PC-3 (cell line): ENCODE measurements at regions of chr1 and their contacts with region 1.

Region 1: GRCh38 chr1:39901698-39902459 is at the start of gene MYCL:
- DNase-seq: peak; percentile 94
- ATAC-seq: peak; percentile 87
- H3K4me3 ChIP-seq: peak within 1 kb of the TSS; percentile 86
- H3K27ac ChIP-seq: 0 out of 2 replicates have a peak within 1 kb of the TSS, but pooled peaks have one; percentile 10
- H3K4me1 ChIP-seq: peaks cover 7% of the 10 kb centered on the region; the same call in 1 of the 2 replicates
- H3K27me3 ChIP-seq: no peaks in the 10 kb centered on the region
- CTCF ChIP-seq: peak; percentile 87
- total RNA-seq, gene MYCL: 4.0 and 6.6 TPM in 2 replicates

Region 2: DNA sequence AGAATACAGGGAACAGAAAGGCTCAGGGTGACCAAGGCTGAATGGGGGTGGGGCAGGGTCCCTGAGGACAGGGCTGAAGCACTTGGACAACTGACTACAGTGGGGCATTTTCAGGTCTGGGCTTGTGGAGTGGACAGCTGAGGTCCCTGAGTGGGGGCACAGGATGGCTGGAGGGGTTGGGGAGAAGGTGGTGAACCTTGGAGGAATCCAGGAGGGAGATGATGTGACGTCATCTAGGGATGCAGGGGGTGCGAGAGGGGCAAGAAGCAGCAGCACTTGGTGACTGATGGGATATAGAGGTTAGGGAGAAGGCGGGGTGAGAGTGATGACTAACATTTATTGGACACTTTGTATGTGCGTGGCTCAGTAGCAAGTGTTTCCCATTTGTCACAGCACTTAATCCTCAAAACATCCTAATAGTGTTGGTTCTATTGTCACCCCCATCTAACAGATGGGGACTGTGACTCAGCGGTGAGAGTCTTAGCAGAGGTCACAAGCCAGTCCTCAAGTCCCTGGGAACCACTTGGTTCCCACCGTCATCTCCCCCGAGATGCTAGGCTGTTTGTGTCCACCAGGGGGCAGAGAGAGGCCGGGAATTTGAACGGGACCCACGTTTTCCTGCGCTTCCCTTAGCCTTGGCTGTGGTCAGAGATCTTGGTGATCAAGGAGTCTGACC is 85.3 kb before region 1 on chr1:
- CTCF ChIA-PET with region 1: interaction called, 11 read pairs
- POLR2A ChIA-PET with region 1: interaction called, 4 read pairs
- intact Hi-C with region 1: loop called (anchors 1 kb)
- DNase-seq: peak; percentile 89
- ATAC-seq: peak; percentile 76
- H3K4me3 ChIP-seq: no peak overlapping the region
- H3K27ac ChIP-seq: peak overlapping the region; percentile 70
- H3K4me1 ChIP-seq: peaks cover 44% of the 10 kb centered on the region
- H3K27me3 ChIP-seq: no peaks in the 10 kb centered on the region
- CTCF ChIP-seq: peak; percentile 75

Region 3: GRCh38 chr1:39845275-39846116 is 56.4 kb before region 1 on chr1:
- CTCF ChIA-PET with region 1: interaction called, 5 read pairs
- POLR2A ChIA-PET with region 1: interaction called, 8 read pairs
- intact Hi-C with region 1: loop called (anchors 1 kb)
- DNase-seq: peak; percentile 23
- ATAC-seq: peak; percentile 39; the same call in 1 of the 2 replicates
- H3K4me3 ChIP-seq: no peak overlapping the region
- H3K27ac ChIP-seq: peak overlapping the region; percentile 42
- H3K4me1 ChIP-seq: peaks cover 23% of the 10 kb centered on the region
- H3K27me3 ChIP-seq: no peaks in the 10 kb centered on the region
- CTCF ChIP-seq: no peak

Region 4: GRCh38 chr1:39866767-39867166 is 35.1 kb before region 1 on chr1:
- CTCF ChIA-PET with region 1: no interaction called
- POLR2A ChIA-PET with region 1: no interaction called
- intact Hi-C with region 1: loop called (anchors 2 kb)
- DNase-seq: peak; percentile 50
- ATAC-seq: peak; percentile 97
- H3K4me3 ChIP-seq: no peak overlapping the region
- H3K27ac ChIP-seq: no peak overlapping the region
- H3K4me1 ChIP-seq: peaks cover 11% of the 10 kb centered on the region; the same call in 1 of the 2 replicates
- H3K27me3 ChIP-seq: no peaks in the 10 kb centered on the region
- CTCF ChIP-seq: no peak

Region 5: DNA sequence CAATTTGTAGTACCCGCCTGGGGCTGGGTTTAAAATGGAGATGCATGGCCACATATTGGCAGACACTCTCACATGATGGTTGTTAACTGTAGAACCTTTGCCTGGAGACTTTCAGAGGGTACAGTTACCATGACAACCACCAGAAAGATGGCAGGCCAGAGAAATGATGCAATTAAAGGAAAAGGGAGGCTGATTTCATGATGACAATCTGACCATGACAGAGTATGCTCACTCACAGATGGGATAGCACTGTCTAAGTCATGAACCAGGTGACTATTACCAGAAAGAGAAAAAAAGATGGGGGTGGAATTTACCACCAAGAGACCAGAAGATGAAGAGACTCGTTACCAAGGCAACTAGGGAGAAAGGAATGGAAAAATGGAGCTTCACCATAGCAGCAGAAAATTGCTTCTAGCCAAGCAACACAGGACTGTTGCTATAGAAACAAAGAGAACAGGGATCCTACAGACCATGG is 15.1 kb before region 1 on chr1:
- CTCF ChIA-PET with region 1: interaction called, 14 read pairs
- POLR2A ChIA-PET with region 1: interaction called, 5 read pairs
- intact Hi-C with region 1: no loop called
- DNase-seq: no peak
- ATAC-seq: no peak
- H3K4me3 ChIP-seq: no peak overlapping the region
- H3K27ac ChIP-seq: no peak overlapping the region
- H3K4me1 ChIP-seq: peaks cover 6% of the 10 kb centered on the region
- H3K27me3 ChIP-seq: no peaks in the 10 kb centered on the region
- CTCF ChIP-seq: no peak

Region 6: GRCh38 chr1:39952359-39953110 is 50.7 kb after region 1 on chr1:
- CTCF ChIA-PET with region 1: no interaction called
- POLR2A ChIA-PET with region 1: no interaction called
- intact Hi-C with region 1: no loop called
- DNase-seq: no peak
- ATAC-seq: no peak
- H3K4me3 ChIP-seq: no peak overlapping the region
- H3K27ac ChIP-seq: no peak overlapping the region
- H3K4me1 ChIP-seq: peaks cover 17% of the 10 kb centered on the region
- H3K27me3 ChIP-seq: no peaks in the 10 kb centered on the region
- CTCF ChIP-seq: no peak

Region 7: GRCh38 chr1:40079774-40080400 is 178.0 kb after region 1 on chr1:
- CTCF ChIA-PET with region 1: no interaction called
- POLR2A ChIA-PET with region 1: no interaction called
- intact Hi-C with region 1: no loop called
- DNase-seq: no peak
- ATAC-seq: no peak
- H3K4me3 ChIP-seq: no peak overlapping the region
- H3K27ac ChIP-seq: no peak overlapping the region
- H3K4me1 ChIP-seq: peaks cover 15% of the 10 kb centered on the region
- H3K27me3 ChIP-seq: no peaks in the 10 kb centered on the region
- CTCF ChIP-seq: no peak

Region 8: DNA sequence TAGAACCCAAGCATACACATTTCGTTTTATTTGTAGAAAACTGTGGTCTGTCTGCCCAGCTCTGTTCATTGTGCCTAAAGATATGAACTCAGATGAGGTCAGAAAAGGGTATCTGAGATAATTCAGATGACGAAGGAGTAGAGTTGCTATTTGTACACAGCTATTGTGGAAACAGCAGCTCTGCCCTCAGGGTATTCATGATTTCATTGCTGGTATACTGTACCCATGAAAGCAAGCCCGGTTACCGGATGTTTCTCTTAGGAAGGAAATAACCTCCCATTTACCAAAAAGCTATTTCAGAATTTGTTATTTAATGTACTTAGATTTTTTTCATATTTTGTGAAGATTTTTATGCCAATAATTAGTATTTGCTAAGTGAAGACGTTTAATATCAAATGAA is 509.4 kb after region 1 on chr1:
- CTCF ChIA-PET with region 1: no interaction called
- POLR2A ChIA-PET with region 1: no interaction called
- intact Hi-C with region 1: no loop called
- DNase-seq: no peak
- ATAC-seq: no peak
- H3K4me3 ChIP-seq: no peak overlapping the region
- H3K27ac ChIP-seq: no peak overlapping the region
- H3K4me1 ChIP-seq: no peaks in the 10 kb centered on the region
- H3K27me3 ChIP-seq: no peaks in the 10 kb centered on the region
- CTCF ChIP-seq: no peak